B cell (primary cell): ENCODE measurements at regions of chr9 and their contacts with region 1.

Region 1: DNA sequence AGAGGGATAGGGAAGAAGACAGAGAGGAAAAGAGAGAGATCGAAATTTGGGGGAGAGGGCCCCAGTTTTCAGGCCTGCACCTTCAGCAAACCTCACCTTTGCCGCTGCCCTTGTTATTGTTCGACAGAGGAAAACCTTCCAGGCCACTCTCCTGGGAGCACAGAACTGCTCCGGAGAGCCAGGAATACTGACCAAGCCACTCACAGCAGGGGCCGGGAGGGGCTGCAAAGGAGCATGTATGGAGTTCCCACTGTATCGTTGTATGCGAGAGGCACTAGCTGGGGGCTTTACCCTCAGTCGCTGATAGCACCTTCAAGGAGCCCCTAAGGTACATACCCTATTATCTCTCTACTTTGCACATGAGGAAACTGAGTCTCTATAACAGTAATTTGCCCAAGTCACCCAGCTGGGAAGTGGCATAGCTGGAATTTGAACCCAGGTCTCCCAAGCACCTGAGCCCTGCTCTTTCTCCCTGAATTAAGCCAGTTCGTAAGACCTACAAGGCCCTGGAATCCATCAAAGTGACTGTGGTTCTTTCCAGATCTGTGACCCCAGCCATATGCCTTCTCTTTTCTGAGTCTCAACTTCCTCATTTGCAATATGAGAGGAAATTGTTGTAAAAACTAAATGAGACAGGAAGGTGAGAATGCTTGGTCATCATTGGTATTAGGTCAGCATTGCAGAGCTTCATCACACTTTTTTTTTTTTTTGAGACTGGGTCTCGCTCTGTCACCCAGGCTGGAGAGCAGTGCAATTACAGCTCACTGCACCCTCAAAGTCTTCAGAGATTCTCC is 21.0 kb upstream of the FOXE1 start:
- DNase-seq: peak; percentile 39
- ATAC-seq: peak; percentile 10
- H3K4me3 ChIP-seq: no peak overlapping the region
- H3K4me3 Mint-ChIP-seq: no peak overlapping the region
- H3K27ac ChIP-seq: no peak overlapping the region
- H3K27ac Mint-ChIP-seq: no peak overlapping the region
- H3K4me1 ChIP-seq: peaks cover 9 to 10% of the 10 kb centered on the region in 2 donors
- H3K4me1 Mint-ChIP-seq: peaks cover 11% of the 10 kb centered on the region
- H3K27me3 ChIP-seq: peaks cover 0 to 10% (median 0%) of the 10 kb centered on the region in 4 experiments
- H3K27me3 Mint-ChIP-seq: peaks cover 25% of the 10 kb centered on the region
- CTCF ChIP-seq: no peak

Region 2: DNA sequence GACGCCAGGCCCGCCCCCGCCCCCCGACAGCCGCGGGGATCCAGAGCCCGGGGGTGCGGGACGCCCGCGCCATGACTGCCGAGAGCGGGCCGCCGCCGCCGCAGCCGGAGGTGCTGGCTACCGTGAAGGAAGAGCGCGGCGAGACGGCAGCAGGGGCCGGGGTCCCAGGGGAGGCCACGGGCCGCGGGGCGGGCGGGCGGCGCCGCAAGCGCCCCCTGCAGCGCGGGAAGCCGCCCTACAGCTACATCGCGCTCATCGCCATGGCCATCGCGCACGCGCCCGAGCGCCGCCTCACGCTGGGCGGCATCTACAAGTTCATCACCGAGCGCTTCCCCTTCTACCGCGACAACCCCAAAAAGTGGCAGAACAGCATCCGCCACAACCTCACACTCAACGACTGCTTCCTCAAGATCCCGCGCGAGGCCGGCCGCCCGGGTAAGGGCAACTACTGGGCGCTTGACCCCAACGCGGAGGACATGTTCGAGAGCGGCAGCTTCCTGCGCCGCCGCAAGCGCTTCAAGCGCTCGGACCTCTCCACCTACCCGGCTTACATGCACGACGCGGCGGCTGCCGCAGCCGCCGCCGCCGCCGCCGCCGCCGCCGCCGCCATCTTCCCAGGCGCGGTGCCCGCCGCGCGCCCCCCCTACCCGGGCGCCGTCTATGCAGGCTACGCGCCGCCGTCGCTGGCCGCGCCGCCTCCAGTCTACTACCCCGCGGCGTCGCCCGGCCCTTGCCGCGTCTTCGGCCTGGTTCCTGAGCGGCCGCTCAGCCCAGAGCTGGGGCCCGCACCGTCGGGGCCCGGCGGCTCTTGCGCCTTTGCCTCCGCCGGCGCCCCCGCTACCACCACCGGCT is 22.0 kb after region 1 on chr9:
- CTCF ChIA-PET with region 1: no interaction called
- POLR2A ChIA-PET with region 1: no interaction called
- intact Hi-C with region 1: loop called (anchors 1 kb)
- DNase-seq: peak; percentile 84
- ATAC-seq: peak; percentile 76
- H3K4me3 ChIP-seq: peak overlapping the region in 4 of 5 experiments; percentile 37 to 61 (median 46)
- H3K4me3 Mint-ChIP-seq: peak overlapping the region; percentile 89
- H3K27ac ChIP-seq: no peak overlapping the region
- H3K27ac Mint-ChIP-seq: peak overlapping the region; percentile 77
- H3K4me1 ChIP-seq: peaks cover 34 to 54% of the 10 kb centered on the region in 2 donors
- H3K4me1 Mint-ChIP-seq: peaks cover 18% of the 10 kb centered on the region
- H3K27me3 ChIP-seq: peaks cover 0 to 91% (median 76%) of the 10 kb centered on the region in 4 experiments
- H3K27me3 Mint-ChIP-seq: peaks cover 62% of the 10 kb centered on the region
- CTCF ChIP-seq: peak; percentile 39

Region 3: GRCh38 chr9:97900738-97901565 is 68.9 kb after region 1 on chr9:
- CTCF ChIA-PET with region 1: no interaction called
- POLR2A ChIA-PET with region 1: no interaction called
- intact Hi-C with region 1: no loop called
- DNase-seq: peak; percentile 60
- ATAC-seq: no peak
- H3K4me3 ChIP-seq: no peak overlapping the region
- H3K4me3 Mint-ChIP-seq: no peak overlapping the region
- H3K27ac ChIP-seq: no peak overlapping the region
- H3K27ac Mint-ChIP-seq: no peak overlapping the region
- H3K4me1 ChIP-seq: peaks cover 2 to 9% of the 10 kb centered on the region in 2 donors
- H3K4me1 Mint-ChIP-seq: peaks cover 17% of the 10 kb centered on the region
- H3K27me3 ChIP-seq: no peaks in the 10 kb centered on the region
- H3K27me3 Mint-ChIP-seq: no peaks in the 10 kb centered on the region
- CTCF ChIP-seq: peak; percentile 81